ENCODE measurements at regions of chr9 and their contacts with region 1.

Region 1: DNA sequence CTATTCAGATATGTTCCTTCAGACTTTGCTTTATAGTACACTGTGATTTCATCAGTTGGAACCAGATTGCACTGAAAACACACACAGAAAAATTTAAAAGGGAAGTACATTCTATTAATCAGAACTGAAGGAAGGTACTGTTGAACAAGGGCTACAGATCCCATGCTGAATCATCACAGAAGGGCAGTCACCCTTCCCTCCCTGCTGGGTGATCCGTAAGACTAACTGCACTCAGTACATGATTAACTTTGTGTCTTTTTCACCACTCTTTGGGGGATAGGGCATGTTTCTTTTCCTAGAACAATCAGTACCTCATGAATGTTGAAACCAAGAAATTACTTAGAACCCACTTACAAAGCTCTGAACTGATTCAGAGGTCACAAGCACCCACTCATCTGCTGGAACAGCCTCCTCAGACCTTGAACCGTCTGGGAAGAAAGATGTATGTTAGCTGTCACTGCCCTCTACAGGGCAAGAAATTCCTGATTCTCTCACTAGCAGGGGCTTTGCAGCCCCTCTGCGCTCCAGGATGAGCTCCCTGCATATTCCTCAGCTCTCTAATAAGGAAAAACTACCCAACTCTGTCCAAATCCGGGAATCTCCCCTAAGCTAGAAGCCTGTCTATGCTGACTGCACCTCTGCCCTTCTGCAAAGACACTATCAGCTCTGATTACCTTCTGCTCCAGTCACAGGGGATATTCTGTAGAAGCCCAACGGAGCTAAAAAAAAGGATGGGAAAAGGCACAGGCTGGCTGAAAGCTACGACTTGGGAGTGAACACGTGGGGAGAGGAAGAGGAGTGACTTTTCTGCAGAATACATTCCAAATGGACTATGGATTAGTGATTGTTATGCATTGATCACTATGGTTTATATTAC is 51.0 kb downstream of the IARS1 start:
- DNase-seq: peak; percentile 40
- H3K4me3 ChIP-seq: no peak overlapping the region
- CTCF ChIP-seq: peak; percentile 35

Region 2: DNA sequence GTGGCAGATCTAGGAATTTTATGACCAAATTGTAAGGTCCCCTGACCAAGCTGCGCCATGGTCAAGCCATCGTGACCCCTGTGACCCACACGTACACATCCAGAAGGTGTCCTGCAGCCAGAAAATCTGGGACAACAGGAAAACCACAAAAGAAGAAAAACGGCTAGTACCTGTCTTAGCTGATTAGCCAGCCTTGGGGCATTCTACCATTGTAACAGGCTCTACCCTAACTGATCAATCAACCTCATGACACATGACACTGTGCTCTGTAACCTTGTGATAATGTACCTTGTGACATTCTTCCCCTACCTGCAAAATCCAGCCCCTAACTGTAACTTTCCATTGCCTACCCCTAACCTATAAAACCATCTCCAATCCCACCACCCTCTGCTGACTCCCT is 170.9 kb before region 1 on chr9:
- CTCF ChIA-PET with region 1: no interaction called
- POLR2A ChIA-PET with region 1: no interaction called
- DNase-seq: no peak
- H3K4me3 ChIP-seq: no peak overlapping the region
- CTCF ChIP-seq: no peak

Region 3: DNA sequence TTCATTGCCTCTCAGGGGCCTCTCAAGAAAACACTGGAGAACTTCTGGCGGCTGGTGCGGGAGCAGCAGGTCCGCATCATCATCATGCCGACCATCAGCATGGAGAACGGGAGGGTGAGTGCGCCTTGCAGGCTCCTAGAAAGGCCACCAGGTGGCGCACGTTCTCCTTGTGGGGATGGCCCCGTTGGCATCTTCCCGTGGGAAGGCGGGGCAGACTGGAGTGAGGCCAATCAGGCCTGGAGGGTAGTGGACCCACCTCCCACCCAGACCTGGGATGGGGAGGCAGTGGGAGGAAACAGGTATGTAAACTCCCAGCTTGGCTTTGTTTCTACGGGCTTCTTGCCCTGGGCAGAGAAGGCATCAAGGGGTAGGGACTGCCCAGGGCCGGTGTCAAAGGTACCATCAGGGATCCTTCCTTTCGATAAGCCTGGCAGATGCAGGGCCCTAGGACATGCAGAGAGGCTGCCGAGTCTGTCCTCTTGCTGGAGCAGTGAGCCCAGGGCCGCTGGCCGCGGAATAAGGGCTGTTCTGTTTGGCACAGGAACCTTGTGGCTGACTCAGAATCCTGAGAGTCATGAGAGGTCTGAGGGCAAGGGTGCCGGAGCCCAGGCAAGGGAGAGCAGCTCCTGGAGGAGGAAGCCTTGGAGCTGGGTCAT is 108.4 kb before region 1 on chr9:
- CTCF ChIA-PET with region 1: interaction called, 591 read pairs
- POLR2A ChIA-PET with region 1: interaction called, 11 read pairs
- DNase-seq: no peak
- H3K4me3 ChIP-seq: peak overlapping the region; percentile 24
- CTCF ChIP-seq: peak; percentile 98

Region 4: DNA sequence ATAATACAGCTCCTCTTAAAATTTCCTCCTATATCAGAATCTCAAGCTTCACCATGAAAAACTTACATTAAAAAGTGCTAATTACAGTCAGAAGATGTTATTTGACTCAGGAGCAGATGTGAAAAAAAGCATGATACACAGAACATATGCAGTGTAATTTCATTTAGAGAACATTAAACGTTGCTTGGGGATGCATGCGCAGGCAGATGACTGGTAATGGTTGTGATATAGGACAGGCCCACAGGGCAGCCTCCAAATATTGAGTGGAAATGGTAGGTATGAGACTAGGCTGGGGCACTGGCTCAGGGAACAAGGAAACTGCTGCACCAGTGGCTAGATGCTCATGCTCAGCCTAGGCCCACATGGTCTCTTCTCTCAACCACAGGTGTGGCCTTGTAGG is 18.7 kb before region 1 on chr9:
- CTCF ChIA-PET with region 1: interaction called, 11 read pairs
- POLR2A ChIA-PET with region 1: no interaction called
- DNase-seq: no peak
- H3K4me3 ChIP-seq: no peak overlapping the region
- CTCF ChIP-seq: no peak

Region 5: DNA sequence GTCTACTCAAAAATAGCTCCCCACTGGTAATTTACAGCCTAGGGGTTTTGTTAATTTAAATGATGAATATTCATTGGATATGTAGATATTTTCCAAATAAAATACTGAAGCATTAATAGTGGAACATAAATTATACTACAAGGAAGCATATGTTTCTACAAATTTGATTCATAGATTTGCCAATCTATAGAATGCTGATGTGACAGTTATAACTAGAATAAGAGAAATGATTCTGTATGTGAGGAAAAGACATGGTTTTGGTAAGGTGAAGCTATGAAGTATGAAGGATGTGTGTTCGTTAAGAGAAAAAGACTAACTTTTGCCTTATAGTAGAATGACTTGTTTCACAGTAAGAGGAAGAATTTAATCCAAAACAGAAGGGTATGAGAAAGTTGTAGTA is 10.3 kb before region 1 on chr9:
- CTCF ChIA-PET with region 1: interaction called, 19 read pairs
- POLR2A ChIA-PET with region 1: no interaction called
- DNase-seq: no peak
- H3K4me3 ChIP-seq: no peak overlapping the region
- CTCF ChIP-seq: no peak

Region 6: DNA sequence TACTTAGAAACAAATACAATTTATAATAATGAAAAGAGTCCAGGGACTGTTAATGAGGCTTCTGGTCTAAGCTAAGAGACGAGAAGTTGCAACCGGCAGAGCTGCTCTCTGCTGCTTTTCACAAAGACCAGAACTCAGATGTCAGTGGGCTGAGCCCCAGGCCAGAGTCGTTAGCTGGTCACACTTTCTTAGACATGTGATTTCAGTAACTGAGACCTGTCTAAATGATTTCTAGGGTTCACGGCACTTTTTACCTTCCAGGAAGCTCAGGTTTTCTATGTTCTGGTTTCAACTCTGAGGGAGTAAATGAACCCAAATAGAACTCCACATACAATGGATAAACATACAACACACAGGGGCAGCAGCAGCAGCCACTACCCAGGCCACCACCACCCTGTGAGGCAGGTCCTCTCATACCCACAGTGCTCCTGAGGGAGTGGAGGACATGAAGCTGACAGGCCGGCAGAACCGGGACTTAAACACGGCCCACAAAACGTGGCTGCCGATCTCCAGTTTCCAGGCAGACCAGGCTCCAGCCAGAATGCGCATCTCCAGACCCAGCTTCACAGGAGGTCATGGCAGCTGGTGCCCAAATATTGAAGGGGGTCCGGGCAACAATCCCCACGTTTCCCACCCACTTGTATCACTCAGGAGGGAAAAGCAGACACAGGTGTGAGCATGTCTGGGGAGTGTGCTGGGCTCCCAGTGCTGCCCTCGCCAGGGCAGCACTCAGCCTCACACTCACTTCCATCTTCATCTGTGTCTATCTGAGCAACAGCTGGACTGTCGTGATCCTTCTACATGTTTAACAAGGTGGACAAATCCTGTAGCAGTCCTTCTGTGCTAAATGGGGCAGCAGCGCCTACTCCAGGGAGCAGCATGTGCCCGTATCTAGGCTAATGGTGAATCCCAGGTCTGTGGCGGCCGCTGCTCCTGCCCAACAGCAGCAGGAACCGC is 12.2 kb after region 1 on chr9:
- CTCF ChIA-PET with region 1: interaction called, 12 read pairs
- POLR2A ChIA-PET with region 1: no interaction called
- DNase-seq: no peak
- H3K4me3 ChIP-seq: no peak overlapping the region
- CTCF ChIP-seq: no peak

Region 7: GRCh38 chr9:92276331-92277032 is 34.0 kb after region 1 on chr9:
- CTCF ChIA-PET with region 1: interaction called, 13 read pairs
- POLR2A ChIA-PET with region 1: no interaction called
- DNase-seq: no peak
- H3K4me3 ChIP-seq: no peak overlapping the region
- CTCF ChIP-seq: no peak

Region 8: GRCh38 chr9:92299116-92299515 is 56.6 kb after region 1 on chr9:
- CTCF ChIA-PET with region 1: no interaction called
- POLR2A ChIA-PET with region 1: no interaction called
- DNase-seq: no peak
- H3K4me3 ChIP-seq: no peak overlapping the region
- CTCF ChIP-seq: no peak

Region 9: DNA sequence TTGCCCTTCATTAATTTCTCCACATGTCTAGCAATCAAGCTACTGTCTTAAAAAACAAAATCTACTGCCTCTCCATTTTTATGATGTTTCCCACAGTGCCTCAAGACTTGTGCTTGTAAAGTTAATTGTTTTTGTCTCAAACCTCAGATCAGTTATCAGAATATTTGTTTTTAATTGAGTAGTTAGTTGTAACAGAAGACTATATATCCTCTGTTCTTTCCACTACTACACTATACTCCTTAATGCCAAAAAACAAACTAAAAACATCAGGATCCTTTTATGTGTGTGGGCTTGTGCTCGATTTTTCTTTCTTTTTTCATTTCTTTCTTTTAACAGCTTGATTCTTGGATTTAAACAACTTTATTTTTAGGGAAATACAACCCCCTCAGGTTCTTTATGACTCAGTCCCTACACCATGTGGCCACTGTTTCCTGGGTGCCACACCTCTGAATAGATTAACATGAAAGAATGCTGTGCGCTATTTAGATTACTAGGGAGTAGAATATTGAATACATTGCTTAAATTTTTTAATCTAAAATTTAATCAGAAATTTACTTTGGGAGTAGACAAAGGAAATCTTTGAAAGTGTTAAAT is 238.6 kb after region 1 on chr9:
- CTCF ChIA-PET with region 1: no interaction called
- POLR2A ChIA-PET with region 1: no interaction called
- DNase-seq: no peak
- H3K4me3 ChIP-seq: no peak overlapping the region
- CTCF ChIP-seq: no peak

Region 10: GRCh38 chr9:92538541-92538940 is 296.0 kb after region 1 on chr9:
- CTCF ChIA-PET with region 1: no interaction called
- POLR2A ChIA-PET with region 1: no interaction called
- DNase-seq: peak; percentile 50
- H3K4me3 ChIP-seq: no peak overlapping the region
- CTCF ChIP-seq: no peak